Activated CD8-positive, alpha-beta memory T cell treated with anti-CD3 and anti-CD28 coated beads, Interleukin-2, amount 10 ng/mL, durations not matched to agents 7 days and 5 days (primary cell): ENCODE measurements at regions of chr1 and their contacts with region 1.

Region 1: GRCh38 chr1:26787706-26788514 is at the start of gene PIGV:
- DNase-seq: peak; percentile 93
- ATAC-seq: peak; percentile 74
- H3K4me3 Mint-ChIP-seq: peak within 1 kb of the TSS; percentile 81
- H3K27ac Mint-ChIP-seq: peak within 1 kb of the TSS; percentile 100
- H3K4me1 Mint-ChIP-seq: peaks cover 70% of the 10 kb centered on the region
- H3K27me3 Mint-ChIP-seq: peaks cover 2% of the 10 kb centered on the region
- total RNA-seq, gene PIGV: 8.6 to 9.7 TPM

Region 2: DNA sequence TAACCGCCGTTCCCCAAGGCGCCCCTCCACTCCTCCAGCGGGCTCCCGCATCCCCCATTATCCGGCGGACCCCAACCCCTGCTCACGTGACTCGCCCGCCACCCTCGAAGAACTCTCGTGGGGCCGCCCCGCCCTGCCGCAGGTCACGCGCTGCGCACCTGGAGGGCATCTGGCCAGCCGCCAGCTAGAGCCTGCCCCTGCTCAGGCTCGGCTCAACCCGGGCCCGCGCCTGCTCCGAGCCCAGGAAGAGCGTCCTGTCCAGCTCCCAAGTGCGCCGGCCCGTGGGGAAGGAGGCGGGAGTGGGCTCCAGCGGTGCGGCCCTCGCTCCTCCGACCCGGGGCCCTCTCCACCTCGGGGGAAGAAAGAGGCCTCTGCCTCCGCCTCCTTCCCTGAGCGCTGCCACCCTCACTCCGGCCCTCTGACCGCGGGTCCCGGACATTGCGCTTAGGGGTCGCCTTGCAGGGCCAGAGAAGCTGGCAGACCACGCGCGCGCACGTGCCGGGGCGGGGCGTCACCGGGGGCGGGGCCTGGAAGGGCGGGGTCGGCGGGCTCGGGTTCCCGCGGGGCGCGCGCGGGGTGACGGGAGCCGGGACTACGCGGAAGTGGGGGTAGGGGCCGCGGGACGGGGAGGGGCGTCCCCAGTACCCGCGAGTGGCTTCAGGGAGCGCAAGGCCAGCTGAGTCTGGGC is 287.3 kb before region 1 on chr1:
- CTCF ChIA-PET with region 1: interaction called, 51 read pairs
- DNase-seq: peak; percentile 93
- ATAC-seq: peak; percentile 77
- H3K4me3 Mint-ChIP-seq: peak overlapping the region; percentile 80
- H3K27ac Mint-ChIP-seq: peak overlapping the region; percentile 95
- H3K4me1 Mint-ChIP-seq: peaks cover 17% of the 10 kb centered on the region
- H3K27me3 Mint-ChIP-seq: no peaks in the 10 kb centered on the region

Region 3: DNA sequence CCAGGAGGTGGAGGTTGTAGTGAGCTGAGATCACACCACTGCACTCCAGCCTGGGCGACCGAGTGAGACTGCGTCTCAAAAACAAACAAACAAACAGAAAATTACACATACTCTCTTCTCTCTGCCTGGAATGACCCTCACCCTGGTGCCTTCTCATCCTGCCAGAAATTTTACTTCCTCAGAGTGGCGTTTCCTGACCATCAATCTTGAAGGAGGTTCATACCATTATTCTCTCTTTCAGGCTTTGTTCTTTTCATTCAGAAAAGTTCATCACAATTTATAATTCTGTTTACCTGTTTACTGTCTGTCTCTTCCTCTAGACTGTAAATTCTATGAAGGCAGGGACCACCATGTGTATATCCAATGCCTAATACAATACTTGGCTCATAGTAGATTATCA is 179.0 kb before region 1 on chr1:
- CTCF ChIA-PET with region 1: interaction called, 272 read pairs
- DNase-seq: no peak
- ATAC-seq: no peak
- H3K4me3 Mint-ChIP-seq: no peak overlapping the region
- H3K27ac Mint-ChIP-seq: no peak overlapping the region
- H3K4me1 Mint-ChIP-seq: no peaks in the 10 kb centered on the region
- H3K27me3 Mint-ChIP-seq: peaks cover 35% of the 10 kb centered on the region

Region 4: GRCh38 chr1:26695356-26696118 is 92.4 kb before region 1 on chr1 and contains the start of gene ARID1A:
- CTCF ChIA-PET with region 1: interaction called, 79 read pairs
- DNase-seq: peak; percentile 97
- ATAC-seq: peak; percentile 69
- H3K4me3 Mint-ChIP-seq: peak within 1 kb of the TSS; percentile 91
- H3K27ac Mint-ChIP-seq: peak within 1 kb of the TSS; percentile 98
- H3K4me1 Mint-ChIP-seq: peaks cover 31% of the 10 kb centered on the region
- H3K27me3 Mint-ChIP-seq: no peaks in the 10 kb centered on the region
- total RNA-seq, gene ARID1A: 92.4 to 112 TPM

Region 5: DNA sequence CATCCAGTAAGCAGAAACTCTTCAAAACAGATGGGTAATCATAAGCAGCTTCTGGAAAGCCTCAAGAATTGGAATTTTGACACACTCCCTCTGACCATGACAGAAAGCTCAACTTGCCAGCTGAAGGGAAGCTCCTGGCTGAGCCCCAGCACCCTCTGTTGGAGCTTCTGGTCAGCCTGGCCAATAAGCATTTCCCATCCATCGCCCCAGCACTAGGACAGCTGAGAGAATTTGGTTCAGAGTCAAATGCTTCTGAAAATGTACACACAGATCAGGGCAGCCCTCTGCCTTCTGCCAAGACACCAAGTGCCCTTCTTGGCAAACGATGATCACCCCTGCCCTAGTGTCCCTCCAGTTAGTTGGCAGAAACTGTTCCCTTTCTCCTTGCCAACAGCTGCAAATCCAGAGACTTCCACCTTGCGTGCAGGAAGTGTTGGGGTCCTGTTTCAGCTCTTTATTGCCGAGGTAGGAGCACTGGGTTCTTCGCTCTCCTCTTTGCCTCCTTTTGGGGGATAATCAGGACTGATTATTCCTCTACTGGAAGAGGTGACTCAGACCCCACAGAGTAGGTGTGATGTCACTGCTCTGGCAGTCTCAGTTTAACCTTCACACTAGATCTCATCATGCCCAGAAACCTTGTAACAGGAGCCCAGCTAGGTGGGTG is 11.7 kb after region 1 on chr1:
- CTCF ChIA-PET with region 1: interaction called, 106 read pairs
- DNase-seq: peak; percentile 63
- ATAC-seq: peak; percentile 76
- H3K4me3 Mint-ChIP-seq: peak overlapping the region; percentile 56
- H3K27ac Mint-ChIP-seq: peak overlapping the region; percentile 97
- H3K4me1 Mint-ChIP-seq: peaks cover 47% of the 10 kb centered on the region
- H3K27me3 Mint-ChIP-seq: no peaks in the 10 kb centered on the region

Region 6: DNA sequence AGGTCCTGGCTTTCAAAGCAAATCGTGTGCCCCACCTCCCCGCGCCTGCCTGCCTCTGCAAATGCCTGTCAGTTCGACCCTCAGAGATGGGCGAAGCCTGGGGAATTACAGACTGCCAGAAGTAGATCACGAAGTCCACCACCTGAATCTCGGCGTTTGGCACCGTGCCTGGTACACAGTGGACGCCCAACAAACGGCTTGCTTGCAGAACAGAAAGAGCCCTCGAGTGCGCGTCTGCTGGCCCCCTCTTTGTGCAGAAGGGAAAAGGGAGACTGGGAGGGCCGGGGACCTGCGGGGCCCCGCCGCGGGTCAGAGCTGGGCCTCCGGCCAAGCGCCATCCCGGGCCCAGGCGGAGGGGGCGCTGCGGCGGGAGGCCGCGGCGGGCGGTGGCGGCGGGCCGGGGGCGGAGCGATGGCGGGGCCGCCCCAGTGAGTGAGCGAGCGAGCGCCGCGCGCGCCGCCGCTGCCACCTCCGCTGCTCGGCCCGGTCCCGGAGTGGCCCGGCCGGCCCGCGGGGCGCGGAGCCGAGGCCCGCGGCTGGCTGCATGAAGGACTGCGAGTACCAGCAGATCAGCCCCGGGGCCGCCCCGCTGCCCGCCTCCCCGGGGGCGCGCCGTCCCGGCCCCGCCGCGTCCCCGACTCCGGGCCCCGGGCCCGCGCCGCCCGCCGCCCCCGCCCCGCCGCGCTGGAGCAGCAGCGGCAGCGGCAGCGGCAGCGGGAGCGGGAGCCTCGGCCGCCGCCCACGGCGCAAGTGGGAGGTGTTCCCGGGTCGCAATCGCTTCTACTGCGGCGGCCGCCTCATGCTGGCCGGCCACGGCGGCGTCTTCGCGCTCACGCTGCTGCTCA is 38.6 kb after region 1 on chr1 and contains the start of gene ZDHHC18:
- CTCF ChIA-PET with region 1: interaction called, 40 read pairs
- DNase-seq: peak; percentile 70
- ATAC-seq: peak; percentile 93
- H3K4me3 Mint-ChIP-seq: peak within 1 kb of the TSS; percentile 90
- H3K27ac Mint-ChIP-seq: peak within 1 kb of the TSS; percentile 85
- H3K4me1 Mint-ChIP-seq: peaks cover 52% of the 10 kb centered on the region
- H3K27me3 Mint-ChIP-seq: no peaks in the 10 kb centered on the region
- total RNA-seq, gene ZDHHC18: 53.1 to 54.9 TPM

Region 7: DNA sequence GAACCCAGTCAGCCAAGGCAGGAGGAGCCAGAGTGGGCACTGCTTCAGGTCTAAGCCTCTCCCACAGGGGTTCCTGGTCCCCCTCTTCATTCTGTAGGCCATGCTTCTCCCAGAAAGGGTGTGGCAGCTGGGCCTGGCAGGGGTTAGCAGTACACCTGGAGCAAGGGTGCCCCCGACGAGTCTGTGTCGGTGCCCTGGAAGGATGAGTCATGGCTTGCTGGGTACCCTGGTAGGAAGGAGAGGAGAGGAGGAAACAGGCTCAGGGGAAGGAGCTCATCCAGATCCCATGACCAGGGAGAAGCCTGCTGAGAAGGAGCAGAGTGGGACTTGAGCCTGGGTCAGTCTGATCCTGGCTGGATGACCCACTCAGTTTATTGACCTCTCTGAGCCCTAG is 162.0 kb after region 1 on chr1:
- CTCF ChIA-PET with region 1: no interaction called
- DNase-seq: no peak
- ATAC-seq: no peak
- H3K4me3 Mint-ChIP-seq: no peak overlapping the region
- H3K27ac Mint-ChIP-seq: no peak overlapping the region
- H3K4me1 Mint-ChIP-seq: no peaks in the 10 kb centered on the region
- H3K27me3 Mint-ChIP-seq: no peaks in the 10 kb centered on the region